ENCODE measurements at regions of chr17 and their contacts with region 1.

Region 1: DNA sequence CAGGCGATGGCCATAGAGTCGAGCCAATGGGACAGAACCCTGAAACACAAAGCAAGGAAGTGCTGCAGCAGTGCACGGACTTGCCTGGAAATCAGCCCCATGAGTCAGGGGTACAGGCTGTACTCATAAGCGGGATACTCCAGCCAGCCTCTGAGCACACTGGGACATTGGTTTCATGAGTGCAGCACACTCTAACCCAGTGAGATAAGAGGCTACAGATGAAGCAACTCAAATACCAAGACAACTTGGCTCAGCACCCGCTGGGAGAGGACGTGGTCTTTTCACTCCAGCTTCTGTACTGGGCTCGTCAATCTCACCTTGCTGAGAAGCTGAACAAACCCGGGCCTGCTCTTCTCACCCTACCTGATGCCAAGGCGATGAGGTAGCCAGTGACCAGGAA is 98.2 kb downstream of the AXIN2 start:
- DNase-seq: peak; percentile 90 to 96
- ATAC-seq: peak; percentile 90 to 93
- H3K4me3 ChIP-seq: no peak overlapping the region
- H3K27ac ChIP-seq: peak overlapping the region; percentile 82 to 89 (median 87)
- H3K4me1 ChIP-seq: peaks cover 39 to 43% of the 10 kb centered on the region in 2 donors
- H3K27me3 ChIP-seq: no peaks in the 10 kb centered on the region
- CTCF ChIP-seq: peak in 1 of 5 experiments; percentile 16
- POLR2A ChIP-seq: peak in 1 of 2 donors; percentile 50

Region 2: GRCh38 chr17:64975329-64976087 is 487.7 kb before region 1 on chr17:
- in situ Hi-C with region 1: no loop called
- intact Hi-C with region 1: loop called (anchors 10 kb)
- DNase-seq: peak; percentile 89 to 92
- ATAC-seq: peak; percentile 90 to 94
- H3K4me3 ChIP-seq: peak overlapping the region; percentile 70 to 95 (median 84)
- H3K27ac ChIP-seq: peak overlapping the region; percentile 94 to 100 (median 98)
- H3K4me1 ChIP-seq: peaks cover 13% of the 10 kb centered on the region in 2 donors
- H3K27me3 ChIP-seq: no peaks in the 10 kb centered on the region
- CTCF ChIP-seq: peak in 1 of 5 experiments; percentile 3
- POLR2A ChIP-seq: peak; percentile 93 to 97

Region 3: GRCh38 chr17:65389953-65390352 is 73.3 kb before region 1 on chr17:
- in situ Hi-C with region 1: no loop called
- intact Hi-C with region 1: loop called (anchors 5 kb)
- DNase-seq: no peak
- ATAC-seq: peak; percentile 21 to 58
- H3K4me3 ChIP-seq: no peak overlapping the region
- H3K27ac ChIP-seq: peak overlapping the region; percentile 79 to 85 (median 82)
- H3K4me1 ChIP-seq: peaks cover 15 to 31% of the 10 kb centered on the region in 2 donors
- H3K27me3 ChIP-seq: no peaks in the 10 kb centered on the region
- CTCF ChIP-seq: no peak
- POLR2A ChIP-seq: no peak

Region 4: GRCh38 chr17:65407017-65407416 is 56.2 kb before region 1 on chr17:
- in situ Hi-C with region 1: no loop called
- intact Hi-C with region 1: loop called (anchors 5 kb)
- DNase-seq: peak; percentile 40 to 47
- ATAC-seq: peak; percentile 89 to 92
- H3K4me3 ChIP-seq: no peak overlapping the region
- H3K27ac ChIP-seq: peak overlapping the region; percentile 51 to 79 (median 74)
- H3K4me1 ChIP-seq: peaks cover 20 to 25% of the 10 kb centered on the region in 2 donors
- H3K27me3 ChIP-seq: no peaks in the 10 kb centered on the region
- CTCF ChIP-seq: no peak
- POLR2A ChIP-seq: no peak

Region 5: GRCh38 chr17:65495122-65496055 is 32.1 kb after region 1 on chr17:
- in situ Hi-C with region 1: no loop called
- intact Hi-C with region 1: no loop called
- DNase-seq: no peak
- ATAC-seq: no peak
- H3K4me3 ChIP-seq: no peak overlapping the region
- H3K27ac ChIP-seq: no peak overlapping the region
- H3K4me1 ChIP-seq: no peaks in the 10 kb centered on the region
- H3K27me3 ChIP-seq: no peaks in the 10 kb centered on the region
- CTCF ChIP-seq: no peak
- POLR2A ChIP-seq: no peak

Region 6: DNA sequence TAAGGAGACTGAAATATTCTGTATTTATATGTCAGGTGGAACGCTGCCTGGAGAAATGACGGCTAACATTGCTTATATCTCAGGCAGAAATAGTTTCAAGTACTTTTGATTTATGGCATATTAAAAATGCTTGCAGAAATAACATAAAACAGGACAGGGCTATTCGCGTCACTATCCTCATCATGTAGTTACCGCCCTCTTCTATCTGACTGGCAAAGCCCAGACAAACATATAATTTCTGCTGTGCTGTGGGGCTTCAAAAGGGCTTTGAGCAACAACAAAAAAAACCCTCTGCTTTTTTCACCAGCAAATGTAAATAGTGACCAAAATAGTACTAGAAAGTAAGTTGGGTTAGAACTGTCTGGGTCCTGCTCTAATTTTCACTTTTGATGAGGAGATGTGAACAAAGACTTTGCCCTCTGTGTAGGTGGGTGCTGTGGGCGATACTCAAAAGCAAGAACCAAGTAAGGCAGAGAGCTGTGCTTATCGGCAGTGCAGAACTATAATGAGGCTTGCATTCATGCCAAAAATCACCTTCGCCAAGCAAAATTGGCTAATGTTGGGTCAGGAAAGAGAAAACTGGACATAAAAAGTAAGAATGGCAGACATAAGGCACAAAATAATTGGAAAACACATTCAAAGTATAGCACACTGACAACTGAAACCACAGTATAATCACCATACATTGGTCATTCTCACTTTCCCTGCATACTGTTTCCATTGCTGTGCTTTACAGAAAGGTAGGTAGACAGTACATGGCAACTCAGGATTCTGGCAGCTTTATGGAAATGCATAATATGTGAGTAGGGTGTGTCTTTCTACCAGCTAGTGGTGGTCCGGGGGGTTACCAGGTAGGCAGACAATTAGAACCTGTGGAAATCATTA is 249.4 kb after region 1 on chr17:
- in situ Hi-C with region 1: no loop called
- intact Hi-C with region 1: no loop called
- DNase-seq: no peak
- ATAC-seq: no peak
- H3K4me3 ChIP-seq: no peak overlapping the region
- H3K27ac ChIP-seq: no peak overlapping the region
- H3K4me1 ChIP-seq: no peaks in the 10 kb centered on the region
- H3K27me3 ChIP-seq: no peaks in the 10 kb centered on the region
- CTCF ChIP-seq: no peak
- POLR2A ChIP-seq: no peak